Head of caudate nucleus (tissue), 42 donors: ENCODE measurements at regions of chr1 and their contacts with region 1.

Region 1: DNA sequence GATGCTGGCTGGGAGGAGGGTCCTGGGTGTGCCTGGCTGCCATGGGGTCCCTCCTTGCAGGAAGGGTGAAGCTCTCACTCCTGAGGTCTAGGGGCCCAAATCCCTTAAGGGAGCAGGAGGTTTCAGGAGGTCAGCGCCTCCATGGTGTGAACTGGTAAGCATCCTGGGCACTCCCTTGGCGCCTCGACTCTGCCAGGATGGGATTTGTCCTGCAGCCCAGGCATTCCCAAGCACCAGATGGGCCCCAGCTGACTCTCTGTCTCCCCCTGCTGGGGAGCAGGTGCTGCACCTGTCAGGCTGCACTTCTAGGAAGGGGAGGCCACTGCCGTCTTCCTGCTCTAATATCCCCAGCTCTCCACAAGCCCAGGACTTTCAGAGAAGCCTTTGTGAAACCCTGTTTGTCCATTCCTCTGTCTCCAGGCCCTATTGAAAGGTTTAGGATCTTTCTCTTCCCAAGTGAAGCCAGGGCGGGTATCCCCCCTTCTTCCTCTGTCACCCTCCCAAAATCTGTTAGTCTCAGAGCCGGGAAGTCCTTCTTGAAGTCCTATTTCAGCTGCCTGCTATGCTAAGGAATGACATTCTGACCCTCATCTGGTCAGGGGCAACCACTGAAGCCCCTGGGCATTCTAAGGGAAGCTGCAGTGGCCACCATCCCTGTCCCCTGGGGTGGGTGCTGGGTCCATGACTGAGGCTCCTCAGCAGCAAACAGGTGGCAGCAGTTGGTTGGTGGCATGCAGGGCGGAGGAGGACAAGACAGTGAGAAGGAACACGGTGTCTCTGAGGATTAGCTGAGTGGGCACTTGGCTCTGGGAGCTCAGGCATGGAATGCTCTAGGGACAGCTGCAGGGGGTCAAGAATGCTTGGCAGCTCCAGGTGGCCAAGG is 3.3 kb downstream of the MYBPH start:
- DNase-seq: peak; percentile 67 to 93 (median 82)

Region 2: DNA sequence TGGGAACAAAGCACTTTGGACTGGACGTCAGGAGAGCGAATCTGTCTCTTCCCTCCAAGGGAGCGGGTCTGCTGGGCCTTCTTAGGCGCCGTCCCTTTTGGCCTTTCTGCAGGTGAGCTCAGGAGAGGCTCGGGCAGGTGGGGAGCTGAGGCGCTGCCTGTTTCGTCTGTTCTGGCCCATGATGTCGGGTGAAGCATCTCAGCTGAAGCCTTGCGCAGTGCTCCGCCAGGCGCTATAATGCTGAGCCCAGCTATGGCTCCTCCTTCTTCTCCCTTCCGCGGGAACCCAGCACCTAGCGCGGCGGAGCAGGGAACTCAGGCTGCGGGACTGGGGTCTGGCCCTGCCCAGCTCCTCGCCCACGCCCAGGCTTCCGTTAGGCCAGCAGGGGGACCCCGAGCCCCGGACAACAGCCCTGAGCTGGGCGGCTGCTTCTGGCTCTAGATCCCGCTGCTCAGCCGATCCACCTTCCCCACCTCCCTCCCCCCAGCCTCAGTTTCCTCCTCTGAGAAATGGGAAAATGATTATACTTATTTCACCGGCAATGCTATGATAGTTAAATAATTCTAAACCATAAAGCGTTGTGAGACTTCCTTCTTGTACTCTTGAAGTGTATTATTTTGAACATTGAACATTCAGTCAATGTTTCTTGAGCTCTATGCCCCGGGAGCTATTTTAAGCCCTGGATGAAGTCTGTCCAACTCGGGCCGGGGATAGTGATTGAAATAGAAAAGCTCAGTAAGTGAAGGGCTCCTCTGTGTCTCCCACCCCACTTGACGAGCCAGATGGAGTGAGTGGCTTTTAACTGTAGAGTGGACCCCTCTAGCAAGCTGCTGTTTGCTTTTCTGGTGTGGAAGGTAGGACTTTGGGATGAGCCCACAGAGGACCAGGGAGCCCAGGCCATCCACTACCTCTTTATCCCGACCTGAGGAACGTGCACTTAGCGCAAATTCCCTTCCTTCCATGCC is 54.5 kb before region 1 on chr1:
- intact Hi-C with region 1: loop called (anchors 2 kb)
- DNase-seq: peak in 41 of 42 donors; percentile 52 to 93 (median 80)

Region 3: DNA sequence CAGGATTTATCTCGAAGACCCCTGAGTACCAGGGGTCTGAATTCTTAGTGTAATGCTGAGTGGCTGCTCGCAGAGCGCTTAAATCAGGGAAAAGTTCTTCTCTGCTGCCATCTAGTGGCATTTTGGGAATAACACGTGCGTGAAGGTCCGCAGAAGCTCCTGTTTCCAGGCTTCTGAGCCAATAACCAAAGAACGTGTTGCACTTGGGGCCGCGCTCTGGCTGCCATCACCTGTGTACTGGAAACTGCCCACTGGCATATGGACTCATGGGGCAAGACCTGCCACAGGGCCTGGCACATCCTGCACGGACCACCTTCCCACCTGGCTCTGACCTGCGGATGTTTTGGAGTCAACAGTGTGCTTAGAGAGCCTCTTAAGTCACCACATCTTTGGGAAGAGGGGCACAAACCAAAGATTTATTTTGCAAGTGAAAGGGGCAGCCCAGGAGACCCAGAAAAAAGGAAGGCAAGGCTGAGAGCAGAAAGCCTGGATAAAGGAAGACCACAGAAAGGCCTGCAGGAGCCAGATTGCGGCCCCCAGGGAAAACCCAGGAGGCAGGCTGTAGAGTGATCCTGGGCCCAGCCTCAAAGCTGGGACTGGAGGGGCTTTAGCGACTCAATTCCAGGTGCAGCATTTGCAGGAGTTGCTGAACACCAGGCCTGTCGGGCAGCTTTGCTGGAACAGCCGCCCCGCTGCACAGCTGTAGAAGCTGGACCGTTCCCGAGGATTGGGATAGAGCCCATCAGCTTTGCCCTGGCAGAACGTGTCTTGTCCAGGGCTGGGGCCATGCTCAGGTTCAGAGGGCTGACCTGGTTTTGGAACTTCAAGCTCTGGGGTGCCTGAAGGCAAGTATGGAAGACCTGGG is 44.1 kb after region 1 on chr1:
- intact Hi-C with region 1: loop called (anchors 5 kb)
- DNase-seq: peak in 41 of 42 donors; percentile 18 to 89 (median 70)

Region 4: GRCh38 chr1:203278082-203278884 is 105.9 kb after region 1 on chr1:
- intact Hi-C with region 1: no loop called
- DNase-seq: peak; percentile 80 to 97 (median 91)

Region 5: DNA sequence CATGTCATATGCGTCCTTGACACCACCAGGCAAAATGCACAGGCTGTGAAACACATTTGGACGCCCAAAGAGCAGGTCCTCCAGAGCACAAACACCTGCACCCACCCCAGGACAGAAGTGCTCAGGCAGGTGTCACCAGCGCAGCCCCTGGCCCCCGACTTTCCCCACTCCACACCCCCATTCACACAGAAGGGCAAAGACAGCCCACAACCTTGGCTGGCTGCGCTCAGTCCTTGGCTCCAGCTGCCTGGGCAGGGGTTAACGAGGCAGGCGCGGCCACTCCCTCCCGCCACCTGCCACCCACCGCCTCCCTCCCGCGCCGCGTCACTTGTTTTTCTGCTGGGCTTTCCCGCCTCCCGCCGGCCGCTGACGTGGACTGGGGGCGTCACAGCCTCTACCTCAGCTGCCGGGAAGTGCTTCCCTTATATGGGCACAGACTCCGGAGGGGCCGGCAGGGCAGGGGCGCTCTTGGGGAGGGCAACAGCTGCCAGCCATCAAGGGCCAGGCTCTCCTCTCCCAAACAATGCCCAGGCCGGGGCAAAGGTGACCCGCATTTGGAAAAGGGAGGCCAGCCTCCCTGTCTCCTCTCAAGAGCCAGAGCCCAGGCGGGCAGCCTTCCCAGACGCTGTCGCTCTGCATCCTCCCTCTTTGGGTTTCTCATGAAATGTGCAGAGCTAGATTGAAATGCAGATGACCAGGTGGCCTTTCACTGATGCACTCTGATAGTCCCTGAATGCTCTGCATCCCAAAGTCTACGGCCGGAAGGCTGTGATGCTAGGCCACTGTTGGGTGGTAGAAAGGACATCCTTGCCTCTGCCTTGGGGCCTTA is 118.1 kb after region 1 on chr1:
- intact Hi-C with region 1: no loop called
- DNase-seq: peak; percentile 90 to 98 (median 96)